MCF 10A (cell line): ENCODE measurements at regions of chr20 and their contacts with region 1.

Region 1: DNA sequence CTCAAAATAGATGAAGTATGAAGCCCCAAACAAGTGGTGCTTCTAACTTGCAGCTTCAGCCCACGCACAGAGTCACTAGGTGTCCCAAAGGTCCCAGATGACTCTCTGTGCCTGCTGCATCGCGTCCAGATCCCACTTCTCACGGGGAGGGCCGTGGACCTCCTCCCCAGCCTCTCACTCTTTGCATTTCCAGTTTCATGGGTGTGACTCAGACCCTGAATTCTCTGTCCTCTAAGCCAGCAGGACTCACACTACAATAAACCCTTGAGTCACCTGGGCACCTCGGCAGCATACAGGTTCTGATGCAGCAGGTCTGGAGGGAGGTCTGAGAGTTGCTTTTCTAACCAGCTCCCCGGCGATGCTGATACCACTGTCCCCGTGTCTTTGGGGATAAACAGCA is 114.0 kb upstream of the RIN2 start:
- DNase-seq: no peak
- H3K4me3 Mint-ChIP-seq: no peak overlapping the region
- H3K27ac Mint-ChIP-seq: no peak overlapping the region
- H3K4me1 Mint-ChIP-seq: no peaks in the 10 kb centered on the region
- H3K27me3 Mint-ChIP-seq: peaks cover 17% of the 10 kb centered on the region
- CTCF ChIP-seq: no peak

Region 2: GRCh38 chr20:19628570-19629169 is 15.4 kb before region 1 on chr20:
- CTCF ChIA-PET with region 1: interaction called, 11 read pairs
- POLR2A ChIA-PET with region 1: no interaction called
- intact Hi-C with region 1: no loop called
- DNase-seq: peak; percentile 87
- H3K4me3 Mint-ChIP-seq: no peak overlapping the region
- H3K27ac Mint-ChIP-seq: peak overlapping the region; percentile 49
- H3K4me1 Mint-ChIP-seq: no peaks in the 10 kb centered on the region
- H3K27me3 Mint-ChIP-seq: no peaks in the 10 kb centered on the region
- CTCF ChIP-seq: peak; percentile 84